ENCODE measurements at regions of chr10 and their contacts with region 1.

Region 1: GRCh38 chr10:43407576-43408330 is 1.2 kb downstream of the HNRNPF start:
- DNase-seq: peak; percentile 94
- H3K4me3 ChIP-seq: peak overlapping the region; percentile 91
- H3K27ac ChIP-seq: peak overlapping the region; percentile 98
- H3K4me1 ChIP-seq: peaks cover 33% of the 10 kb centered on the region
- H3K27me3 ChIP-seq: no peaks in the 10 kb centered on the region
- CTCF ChIP-seq: peak; percentile 44

Region 2: DNA sequence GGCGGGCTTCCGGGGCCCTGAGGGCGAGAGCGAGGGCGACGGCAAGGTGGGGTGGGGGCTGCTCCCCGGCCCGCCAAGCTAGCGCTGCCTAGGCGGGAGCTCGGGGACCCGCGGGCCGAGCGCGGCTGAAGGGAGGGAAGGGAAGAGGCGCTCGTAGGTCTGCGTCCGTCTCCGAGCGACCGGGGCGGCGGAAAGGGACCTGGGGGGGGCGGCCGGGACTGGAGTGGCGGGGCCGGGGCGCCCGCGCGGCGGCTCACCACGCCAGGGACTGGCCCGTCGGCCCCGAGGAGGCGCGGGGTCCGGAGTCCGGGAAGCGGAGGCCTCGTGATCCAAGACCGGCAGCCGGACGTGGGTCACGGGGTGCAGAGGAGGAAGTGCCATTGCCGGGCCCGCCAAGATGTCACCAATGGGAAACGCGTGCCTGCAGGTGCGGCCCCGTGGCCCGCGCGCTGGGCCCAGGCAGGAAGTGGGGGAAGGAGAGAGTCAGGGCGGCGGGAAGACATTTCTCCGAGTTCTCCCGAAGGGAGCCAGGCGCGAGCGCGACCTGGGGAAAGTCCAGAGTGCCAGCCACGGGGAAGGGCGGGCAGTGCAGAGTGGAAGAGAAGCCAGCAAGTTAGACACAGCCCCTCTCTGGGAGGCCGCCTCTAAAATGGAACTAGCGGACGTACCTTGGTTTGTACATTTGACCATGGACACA is 10.7 kb before region 1 on chr10:
- CTCF ChIA-PET with region 1: interaction called, 4 read pairs
- POLR2A ChIA-PET with region 1: interaction called, 6 read pairs
- intact Hi-C with region 1: loop called (anchors 1 kb)
- DNase-seq: peak; percentile 86
- H3K4me3 ChIP-seq: peak overlapping the region; percentile 53
- H3K27ac ChIP-seq: peak overlapping the region; percentile 91
- H3K4me1 ChIP-seq: peaks cover 39% of the 10 kb centered on the region
- H3K27me3 ChIP-seq: no peaks in the 10 kb centered on the region
- CTCF ChIP-seq: no peak

Region 3: DNA sequence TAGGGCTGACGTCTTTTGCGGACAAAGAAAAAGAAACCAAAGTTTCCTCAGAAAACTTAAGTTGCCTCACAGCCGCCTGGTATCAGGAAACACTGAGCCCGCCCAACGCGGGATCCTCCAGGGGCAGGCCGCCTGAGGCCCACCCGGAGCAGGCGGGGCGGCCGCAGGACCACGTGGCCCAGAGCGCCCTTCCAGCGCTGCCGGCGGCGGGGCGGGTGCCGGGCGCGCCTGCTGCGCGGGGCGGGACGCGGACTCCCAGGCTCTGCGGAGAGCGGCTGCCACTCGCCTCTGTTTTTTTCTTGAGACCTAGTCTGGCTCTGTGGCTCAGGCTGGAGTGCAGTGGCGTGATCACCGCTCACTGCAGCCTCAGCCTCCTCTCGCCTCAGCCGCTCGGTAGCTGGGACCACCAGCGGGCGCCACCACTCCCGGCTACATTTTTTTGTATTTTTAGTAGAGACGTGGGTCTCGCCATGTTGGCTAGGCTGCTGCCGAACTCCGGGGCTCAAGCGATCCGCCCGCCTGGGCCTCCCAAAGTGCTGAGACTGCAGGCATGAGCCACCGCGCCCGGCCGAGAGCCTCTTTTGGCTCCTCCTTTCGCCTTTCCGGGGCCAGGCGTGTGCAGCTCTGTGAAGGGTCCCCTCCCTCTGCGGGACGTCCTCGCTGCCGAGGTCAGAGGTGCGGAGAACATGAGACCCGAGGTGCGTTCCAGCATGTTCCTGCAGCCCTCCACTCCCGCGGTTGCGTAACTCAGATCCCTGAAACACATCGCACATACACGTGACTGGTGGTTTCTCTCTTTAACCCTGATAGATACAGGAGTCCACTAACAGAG is 12.8 kb after region 1 on chr10:
- CTCF ChIA-PET with region 1: no interaction called
- POLR2A ChIA-PET with region 1: interaction called, 4 read pairs
- intact Hi-C with region 1: loop called (anchors 1 kb)
- DNase-seq: peak; percentile 93
- H3K4me3 ChIP-seq: peak overlapping the region; percentile 50
- H3K27ac ChIP-seq: peak overlapping the region; percentile 91
- H3K4me1 ChIP-seq: peaks cover 13% of the 10 kb centered on the region
- H3K27me3 ChIP-seq: no peaks in the 10 kb centered on the region
- CTCF ChIP-seq: peak; percentile 27; the same call in 1 of the 2 replicates

Region 4: GRCh38 chr10:43524434-43525247 is 116.9 kb after region 1 on chr10:
- CTCF ChIA-PET with region 1: no interaction called
- POLR2A ChIA-PET with region 1: no interaction called
- intact Hi-C with region 1: no loop called
- DNase-seq: no peak
- H3K4me3 ChIP-seq: no peak overlapping the region
- H3K27ac ChIP-seq: no peak overlapping the region
- H3K4me1 ChIP-seq: no peaks in the 10 kb centered on the region
- H3K27me3 ChIP-seq: no peaks in the 10 kb centered on the region
- CTCF ChIP-seq: no peak